Right cardiac atrium (tissue), 5 donors: ENCODE measurements at regions of chr10 and their contacts with region 1.

Region 1: DNA sequence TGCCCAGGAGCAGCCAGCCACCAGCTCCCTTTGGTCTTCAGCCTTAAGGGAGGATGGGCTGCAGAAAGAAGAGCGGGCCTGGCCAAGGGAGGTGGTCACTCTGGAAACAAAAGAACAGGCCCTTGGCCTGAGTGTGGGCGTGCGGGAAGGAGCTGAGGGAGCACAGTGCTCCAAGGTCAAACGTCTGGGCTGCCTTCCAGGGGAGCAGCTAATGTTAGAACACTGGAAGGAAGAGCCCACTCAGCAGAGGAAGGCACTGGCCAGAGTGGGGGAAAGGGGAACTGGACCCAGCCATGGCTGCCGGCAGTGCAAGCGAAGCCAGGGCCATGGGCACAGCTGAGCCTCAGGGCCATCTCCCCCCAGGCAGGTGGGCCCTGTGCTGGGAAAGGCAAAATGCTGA is 42.7 kb downstream of the FAM53B start:
- DNase-seq: peak; percentile 96 to 98 (median 97)
- ATAC-seq: peak; percentile 90
- H3K4me3 ChIP-seq: no peak overlapping the region
- H3K27ac ChIP-seq: peak overlapping the region; percentile 99
- H3K4me1 ChIP-seq: peaks cover 78% of the 10 kb centered on the region
- H3K27me3 ChIP-seq: no peaks in the 10 kb centered on the region

Region 2: DNA sequence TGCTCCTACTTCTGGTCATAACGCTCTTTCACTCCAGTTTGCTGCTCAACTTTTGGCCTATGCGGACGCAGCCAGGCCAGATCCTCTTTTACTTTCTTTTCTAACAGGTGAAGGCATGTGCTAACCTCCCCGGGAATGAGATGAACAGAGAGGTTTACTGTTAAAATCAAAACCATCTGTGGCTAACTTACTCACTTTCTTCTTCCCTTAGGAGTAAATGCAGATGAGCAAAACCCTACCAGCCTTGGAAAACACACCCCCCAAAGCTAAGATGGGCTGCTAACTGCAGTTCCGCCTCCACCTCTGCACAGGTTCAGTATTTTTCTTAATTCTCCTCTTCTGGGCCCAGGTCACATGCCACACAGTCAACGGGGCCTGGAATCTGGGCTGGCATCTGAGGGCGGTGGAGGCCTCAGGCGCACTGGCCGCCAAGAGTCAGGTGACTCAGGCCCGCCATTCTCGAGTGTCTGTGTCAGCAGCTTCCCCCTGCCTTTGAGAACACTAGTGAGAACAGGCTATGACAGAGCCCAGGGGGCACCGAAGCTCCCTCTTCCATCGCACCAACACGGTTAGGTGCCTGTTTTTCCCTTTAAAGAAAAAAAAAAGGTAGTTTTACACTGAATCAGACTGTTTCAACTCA is 31.6 kb after region 1 on chr10:
- intact Hi-C with region 1: loop called in 1 of 4 experiments (anchors 5 kb)
- DNase-seq: peak; percentile 66 to 83 (median 80)
- ATAC-seq: peak; percentile 41 to 49
- H3K4me3 ChIP-seq: no peak overlapping the region
- H3K27ac ChIP-seq: peak overlapping the region; percentile 94
- H3K4me1 ChIP-seq: peaks cover 68% of the 10 kb centered on the region
- H3K27me3 ChIP-seq: no peaks in the 10 kb centered on the region